ENCODE measurements at regions of chr11 and their contacts with region 1.

Region 1: DNA sequence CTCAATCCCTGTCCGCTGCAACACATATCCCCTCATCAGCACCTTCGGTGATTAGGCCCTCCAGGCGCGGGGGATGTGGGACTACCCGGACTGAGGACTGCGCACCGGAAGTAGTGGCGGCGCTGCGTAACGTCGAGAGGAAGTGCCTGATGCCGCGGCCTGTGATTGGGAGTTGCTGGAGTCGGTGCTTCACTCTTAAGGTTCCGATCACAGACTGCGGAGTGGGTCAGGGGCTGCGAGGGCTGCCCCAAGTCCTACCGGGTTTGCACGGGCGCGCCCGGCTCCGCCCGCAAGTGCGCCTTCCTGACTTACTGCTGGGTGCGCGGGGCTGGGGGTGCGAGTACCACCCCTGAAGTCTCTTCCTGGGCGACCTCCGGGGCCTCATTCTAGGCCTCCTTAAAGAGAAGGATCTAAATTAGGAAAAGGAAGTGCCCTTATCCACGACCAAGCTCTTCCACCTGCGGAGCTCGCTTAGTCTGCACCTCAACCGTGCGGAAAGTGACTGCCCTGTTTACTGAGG is at the start of gene ALKBH3:
- DNase-seq: peak; percentile 96
- H3K4me3 ChIP-seq: peak within 1 kb of the TSS; percentile 71 to 81
- H3K27ac ChIP-seq: peak within 1 kb of the TSS; percentile 42 to 47
- H3K4me1 ChIP-seq: peaks cover 12% of the 10 kb centered on the region
- H3K27me3 ChIP-seq: no peaks in the 10 kb centered on the region
- CTCF ChIP-seq: peak in 1 of 3 experiments; percentile 45
- POLR2A ChIP-seq: no peak
- total RNA-seq, gene ALKBH3: 39.9 to 45.8 TPM

Region 2: DNA sequence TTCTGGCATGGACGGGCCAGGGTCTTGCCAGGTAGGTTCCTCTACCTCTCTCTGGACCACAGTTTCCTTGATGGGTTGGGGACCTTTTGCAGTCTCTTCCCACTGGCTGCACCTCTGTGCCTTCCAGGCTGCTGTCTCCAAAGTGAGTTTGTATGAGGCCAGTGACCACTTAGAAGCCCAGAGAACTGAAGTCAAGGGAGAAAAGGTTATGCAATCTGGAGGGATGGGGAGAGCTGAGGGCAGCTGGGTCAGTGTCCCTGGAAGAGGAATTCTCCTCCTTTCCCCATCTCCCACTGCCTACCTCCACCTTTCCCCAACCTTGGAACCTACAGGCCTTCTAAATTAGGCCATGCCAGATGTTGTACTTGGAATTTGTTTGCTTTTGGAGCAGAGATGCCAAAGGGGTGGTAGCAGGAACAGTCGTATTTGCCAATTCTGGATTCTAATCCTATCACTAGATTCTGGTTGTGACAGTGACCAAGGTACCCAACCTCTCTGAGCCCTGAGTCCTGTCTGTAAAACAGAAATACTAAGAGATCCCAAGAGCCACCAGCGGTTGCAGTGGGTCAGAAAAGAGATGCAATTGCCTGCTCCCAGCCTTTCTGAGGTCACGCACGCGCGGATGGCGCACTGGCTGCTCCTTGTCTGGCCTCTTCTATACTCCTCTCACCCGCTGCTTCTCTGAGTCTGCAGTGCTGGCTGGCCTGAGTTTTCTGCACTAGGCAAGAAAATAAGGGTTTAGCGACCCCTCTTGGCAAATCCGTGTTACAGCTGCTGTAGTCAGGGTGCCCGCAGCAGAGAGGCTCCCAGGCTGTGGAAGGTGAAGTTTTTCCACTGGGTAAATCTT is 156.3 kb after region 1 on chr11:
- intact Hi-C with region 1: loop called (anchors 5 kb)
- DNase-seq: peak; percentile 94
- H3K4me3 ChIP-seq: no peak overlapping the region
- H3K27ac ChIP-seq: peak overlapping the region; percentile 31 to 47
- H3K4me1 ChIP-seq: peaks cover 22% of the 10 kb centered on the region
- H3K27me3 ChIP-seq: no peaks in the 10 kb centered on the region
- CTCF ChIP-seq: peak; percentile 71 to 82 (median 79)
- POLR2A ChIP-seq: no peak